ENCODE measurements at regions of chr1 and their contacts with region 1.

Region 1: GRCh38 chr1:162056043-162056442 is 13.4 kb upstream of the NOS1AP start:
- DNase-seq: peak; percentile 53 to 68
- H3K4me3 ChIP-seq: no peak overlapping the region
- H3K27ac ChIP-seq: no peak overlapping the region
- H3K4me1 ChIP-seq: peaks cover 0 to 3% (median 0%) of the 10 kb centered on the region in 4 donors
- H3K27me3 ChIP-seq: peaks cover 0 to 12% of the 10 kb centered on the region in 2 donors
- CTCF ChIP-seq: peak; percentile 82 to 97

Region 2: DNA sequence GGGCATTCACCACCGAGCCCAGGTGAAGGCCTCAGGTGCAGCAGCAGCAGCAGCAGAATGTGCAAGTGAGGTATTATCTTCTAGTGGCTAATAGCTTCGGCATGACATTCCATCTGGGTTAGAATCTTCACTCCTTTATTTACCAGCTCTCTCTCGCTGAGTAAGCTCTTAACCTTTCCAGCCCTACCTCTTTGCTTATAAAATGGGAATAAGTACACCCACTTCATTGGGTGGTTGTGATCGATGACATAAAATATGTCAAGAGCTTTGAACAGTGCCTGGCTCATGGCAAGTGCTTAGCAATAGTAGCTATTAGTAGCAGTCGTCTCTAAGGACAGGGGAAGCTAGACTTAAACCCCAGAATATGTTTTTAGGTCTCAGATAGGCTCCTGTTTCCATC is 162.9 kb after region 1 on chr1:
- intact Hi-C with region 1: no loop called
- DNase-seq: no peak
- H3K4me3 ChIP-seq: no peak overlapping the region
- H3K27ac ChIP-seq: no peak overlapping the region
- H3K4me1 ChIP-seq: peaks cover 0 to 37% (median 20%) of the 10 kb centered on the region in 4 donors
- H3K27me3 ChIP-seq: peaks cover 0 to 4% of the 10 kb centered on the region in 2 donors
- CTCF ChIP-seq: no peak

Region 3: GRCh38 chr1:162276493-162276892 is 220.4 kb after region 1 on chr1:
- intact Hi-C with region 1: loop called (anchors 5 kb)
- DNase-seq: no peak
- H3K4me3 ChIP-seq: no peak overlapping the region
- H3K27ac ChIP-seq: no peak overlapping the region
- H3K4me1 ChIP-seq: no peaks in the 10 kb centered on the region
- H3K27me3 ChIP-seq: no peaks in the 10 kb centered on the region
- CTCF ChIP-seq: peak; percentile 34 to 41

Region 4: DNA sequence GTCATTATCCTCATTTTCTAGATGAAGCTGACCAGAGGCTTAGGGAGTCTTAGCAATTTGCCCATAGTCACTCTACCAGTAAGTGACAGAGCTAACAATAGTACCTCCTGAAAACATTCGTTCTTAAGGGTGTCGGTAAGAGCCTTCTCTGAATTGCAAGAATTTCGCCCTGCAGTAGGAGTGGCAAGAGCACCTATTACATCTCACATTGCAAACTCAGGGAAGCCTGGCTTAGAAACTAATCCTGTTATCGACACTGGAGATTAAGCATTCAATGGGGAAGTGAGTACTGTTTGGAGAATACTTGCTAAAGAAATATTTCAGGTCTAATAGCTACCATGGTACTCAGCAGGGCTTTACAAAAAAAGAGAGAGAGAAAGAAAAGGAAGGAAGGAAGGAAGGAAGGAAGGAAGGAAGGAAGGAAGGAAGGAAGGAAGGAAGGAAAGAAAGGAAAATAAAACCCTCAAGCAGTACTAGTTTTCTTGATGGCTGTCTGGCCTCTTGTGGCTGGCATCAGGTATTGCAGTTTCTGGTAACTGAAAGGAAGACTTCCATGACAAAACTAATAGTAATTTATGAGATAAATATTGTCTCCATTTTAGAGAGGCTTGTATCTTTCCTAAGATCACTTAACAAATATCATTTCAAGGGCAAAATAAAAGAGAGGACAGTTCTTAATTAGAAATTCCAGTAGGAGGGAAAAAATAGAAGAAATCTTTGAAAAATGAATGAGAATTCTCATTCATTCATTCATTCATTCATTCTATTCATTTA is 335.9 kb after region 1 on chr1:
- intact Hi-C with region 1: loop called (anchors 5 kb)
- DNase-seq: peak in 1 of 2 donors; percentile 47
- H3K4me3 ChIP-seq: no peak overlapping the region
- H3K27ac ChIP-seq: no peak overlapping the region
- H3K4me1 ChIP-seq: peaks cover 0 to 3% (median 0%) of the 10 kb centered on the region in 4 donors
- H3K27me3 ChIP-seq: peaks cover 0 to 16% of the 10 kb centered on the region in 2 donors
- CTCF ChIP-seq: peak; percentile 68 to 74

Measured in tibial artery (tissue), 4 donors.